ENCODE measurements at regions of chr18 and their contacts with region 1.

Region 1: GRCh38 chr18:21997207-21998143 is 171.9 kb upstream of the GATA6 start:
- DNase-seq: peak in 1 of 2 donors; percentile 20
- ATAC-seq: peak; percentile 32 to 87 (median 65)
- H3K4me3 ChIP-seq: no peak overlapping the region
- H3K27ac ChIP-seq: peak overlapping the region in 9 of 10 donors; percentile 17 to 82 (median 68)
- H3K4me1 ChIP-seq: peaks cover 0 to 34% (median 9%) of the 10 kb centered on the region in 9 donors
- H3K27me3 ChIP-seq: no peaks in the 10 kb centered on the region
- CTCF ChIP-seq: peak; percentile 65 to 90 (median 85)

Region 2: GRCh38 chr18:22084547-22084946 is 87.1 kb after region 1 on chr18:
- intact Hi-C with region 1: loop called in 3 of 10 experiments (anchors 5 to 10 kb)
- DNase-seq: peak in 1 of 2 donors; percentile 71
- ATAC-seq: peak; percentile 51 to 88 (median 82)
- H3K4me3 ChIP-seq: no peak overlapping the region
- H3K27ac ChIP-seq: peak overlapping the region in 6 of 10 donors; percentile 23 to 83 (median 80)
- H3K4me1 ChIP-seq: peaks cover 0 to 27% (median 9%) of the 10 kb centered on the region in 9 donors
- H3K27me3 ChIP-seq: no peaks in the 10 kb centered on the region
- CTCF ChIP-seq: no peak

Region 3: DNA sequence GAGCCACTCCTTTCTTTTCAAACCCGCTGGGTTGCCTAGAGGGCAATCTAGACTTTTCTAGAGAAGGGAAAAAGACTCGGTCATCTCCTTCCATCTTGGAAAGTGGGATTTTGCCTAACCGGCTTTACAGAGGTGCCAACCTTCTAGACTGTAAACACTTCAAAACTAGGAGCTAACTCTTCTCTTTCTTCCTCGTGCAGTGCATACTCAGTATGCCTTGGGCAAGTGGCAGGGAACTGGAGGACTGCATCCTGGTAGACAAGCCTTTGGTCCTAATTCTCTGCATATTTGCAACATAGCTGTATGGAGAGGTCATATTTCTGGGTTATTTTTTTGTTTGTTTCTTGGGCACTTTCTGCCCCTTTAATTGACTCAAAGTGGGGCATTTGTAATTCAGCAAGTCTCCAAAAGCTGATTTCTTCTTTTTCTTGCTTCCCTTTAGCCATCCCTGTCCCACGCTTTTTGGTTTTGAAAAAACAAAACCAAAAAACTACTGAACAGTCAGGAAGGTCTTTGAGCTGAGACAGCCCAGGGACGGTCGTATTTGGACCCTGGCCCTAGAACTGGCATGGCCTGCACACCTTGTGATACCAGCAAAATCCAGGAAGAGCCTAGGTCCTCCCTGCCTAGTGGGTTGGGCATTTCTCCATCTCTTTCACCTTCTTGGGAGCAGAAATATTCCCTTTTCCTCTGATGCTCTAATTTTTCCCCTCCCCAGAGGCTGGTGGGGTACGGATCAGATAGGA is 166.1 kb after region 1 on chr18:
- intact Hi-C with region 1: loop called (anchors 2 to 10 kb)
- DNase-seq: no peak
- ATAC-seq: no peak
- H3K4me3 ChIP-seq: peak overlapping the region in 1 of 10 donors; percentile 77
- H3K27ac ChIP-seq: peak overlapping the region in 6 of 10 donors; percentile 96 to 100 (median 98)
- H3K4me1 ChIP-seq: peaks cover 0 to 46% (median 25%) of the 10 kb centered on the region in 9 donors
- H3K27me3 ChIP-seq: peaks cover 0 to 84% (median 51%) of the 10 kb centered on the region in 7 donors
- CTCF ChIP-seq: no peak

Region 4: GRCh38 chr18:22223254-22223960 is 225.9 kb after region 1 on chr18:
- intact Hi-C with region 1: loop called in 1 of 10 experiments (anchors 10 kb)
- DNase-seq: peak; percentile 59 to 69
- ATAC-seq: peak; percentile 63 to 99 (median 84)
- H3K4me3 ChIP-seq: no peak overlapping the region
- H3K27ac ChIP-seq: no peak overlapping the region
- H3K4me1 ChIP-seq: peaks cover 0 to 12% (median 7%) of the 10 kb centered on the region in 9 donors
- H3K27me3 ChIP-seq: no peaks in the 10 kb centered on the region
- CTCF ChIP-seq: no peak

Region 5: GRCh38 chr18:22703883-22704585 is 706.6 kb after region 1 on chr18:
- intact Hi-C with region 1: loop called in 2 of 10 experiments (anchors 5 to 10 kb)
- DNase-seq: peak in 1 of 2 donors; percentile 29
- ATAC-seq: peak in 7 of 8 donors; percentile 67 to 85 (median 78)
- H3K4me3 ChIP-seq: no peak overlapping the region
- H3K27ac ChIP-seq: no peak overlapping the region
- H3K4me1 ChIP-seq: peaks cover 0 to 28% (median 3%) of the 10 kb centered on the region in 9 donors
- H3K27me3 ChIP-seq: no peaks in the 10 kb centered on the region
- CTCF ChIP-seq: peak; percentile 71 to 91 (median 85)

Measured in heart right ventricle (tissue), 16 donors.